SK-N-SH (cell line): ENCODE measurements at regions of chr2 and their contacts with region 1.

Region 1: GRCh38 chr2:117692001-117692763 is 122.3 kb upstream of the DDX18 start:
- DNase-seq: no peak
- H3K4me3 ChIP-seq: no peak overlapping the region
- H3K27ac ChIP-seq: peak overlapping the region in 1 of 2 experiments; percentile 99; a peak in 2 of 4 replicates
- H3K4me1 ChIP-seq: peaks cover 0 to 37% of the 10 kb centered on the region in 2 experiments; a peak in 2 of 4 replicates
- H3K27me3 ChIP-seq: no peaks in the 10 kb centered on the region
- CTCF ChIP-seq: no peak
- EP300 ChIP-seq: no peak
- RAD21 ChIP-seq: no peak

Region 2: GRCh38 chr2:117470311-117471095 is 221.7 kb before region 1 on chr2:
- CTCF ChIA-PET with region 1: interaction called, 10 read pairs
- POLR2A ChIA-PET with region 1: no interaction called
- DNase-seq: peak; percentile 43
- H3K4me3 ChIP-seq: no peak overlapping the region; a peak in 1 of 4 replicates
- H3K27ac ChIP-seq: peak overlapping the region in 1 of 2 experiments; percentile 82; a peak in 2 of 4 replicates
- H3K4me1 ChIP-seq: peaks cover 0 to 3% of the 10 kb centered on the region in 2 experiments; a peak in 1 of 4 replicates
- H3K27me3 ChIP-seq: no peaks in the 10 kb centered on the region
- CTCF ChIP-seq: peak; percentile 40
- EP300 ChIP-seq: peak in 1 of 2 experiments; percentile 77; a peak in 2 of 4 replicates
- RAD21 ChIP-seq: peak; percentile 89

Region 3: DNA sequence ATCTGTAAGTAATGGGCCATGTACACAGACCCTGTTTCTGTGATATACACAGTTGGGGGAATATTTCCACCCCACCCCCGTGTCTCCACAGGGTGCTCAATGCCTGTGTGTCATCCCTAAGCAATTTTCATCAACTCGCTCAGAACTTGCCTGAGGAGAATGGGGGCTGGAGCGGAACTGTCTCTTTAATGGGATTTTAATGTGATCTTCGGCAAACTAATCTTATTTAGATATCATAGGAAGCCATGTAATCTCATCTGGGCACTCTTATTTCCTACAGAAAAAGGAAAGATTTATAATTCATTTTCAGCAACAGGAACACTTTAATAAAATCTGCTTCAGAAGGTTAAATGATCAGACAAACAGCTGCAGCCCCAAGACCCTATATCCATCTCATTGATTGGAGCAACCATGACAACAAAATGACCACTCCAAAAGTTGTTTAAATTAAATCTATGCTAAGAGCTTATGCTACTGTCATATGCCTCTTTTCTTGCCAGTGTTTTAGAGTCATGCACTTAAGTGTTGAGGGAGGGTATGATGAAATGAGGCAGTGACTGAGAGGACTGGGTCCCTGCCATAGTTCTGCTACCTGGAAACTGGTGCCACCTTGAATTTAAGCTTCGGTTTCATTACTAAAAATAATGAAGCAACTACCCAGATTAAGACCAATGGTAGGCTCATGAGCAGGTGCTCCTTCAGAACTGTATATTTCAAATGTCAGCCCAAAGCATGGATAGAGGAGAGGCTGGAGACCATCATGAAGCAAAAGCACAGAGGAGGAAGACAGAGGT is 60.8 kb before region 1 on chr2:
- CTCF ChIA-PET with region 1: interaction called, 5 read pairs
- POLR2A ChIA-PET with region 1: interaction called, 30 read pairs
- DNase-seq: peak; percentile 80
- H3K4me3 ChIP-seq: no peak overlapping the region
- H3K27ac ChIP-seq: peak overlapping the region in 1 of 2 experiments; percentile 99; a peak in 2 of 4 replicates
- H3K4me1 ChIP-seq: peaks cover 0 to 28% of the 10 kb centered on the region in 2 experiments; a peak in 2 of 4 replicates
- H3K27me3 ChIP-seq: no peaks in the 10 kb centered on the region
- CTCF ChIP-seq: no peak
- EP300 ChIP-seq: peak; percentile 65 to 100; a peak in 3 of 4 replicates
- RAD21 ChIP-seq: peak; percentile 33

Region 4: DNA sequence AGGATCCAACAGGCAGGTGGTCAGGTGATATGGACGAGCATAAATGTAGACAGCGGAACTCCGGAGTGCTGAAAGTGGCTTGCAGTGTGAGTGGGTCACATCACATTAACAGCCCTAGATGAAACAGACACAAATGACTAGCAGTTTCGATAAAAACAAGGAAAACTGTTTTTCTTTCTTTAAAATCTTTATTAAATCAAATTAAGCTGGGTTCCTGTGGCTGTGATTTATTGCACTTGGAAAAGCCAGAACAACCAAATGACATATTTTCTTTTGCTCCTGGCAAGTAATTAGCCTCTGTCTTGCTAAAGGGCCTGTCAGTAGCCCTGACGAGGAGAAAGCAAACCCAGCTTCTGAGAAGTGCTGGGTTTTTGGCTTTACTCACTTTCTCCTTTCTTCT is 30.6 kb before region 1 on chr2:
- CTCF ChIA-PET with region 1: interaction called, 6 read pairs
- POLR2A ChIA-PET with region 1: interaction called, 14 read pairs
- DNase-seq: peak; percentile 71
- H3K4me3 ChIP-seq: no peak overlapping the region
- H3K27ac ChIP-seq: peak overlapping the region in 1 of 2 experiments; percentile 98; a peak in 2 of 4 replicates
- H3K4me1 ChIP-seq: peaks cover 0 to 33% of the 10 kb centered on the region in 2 experiments; a peak in 2 of 4 replicates
- H3K27me3 ChIP-seq: no peaks in the 10 kb centered on the region
- CTCF ChIP-seq: no peak
- EP300 ChIP-seq: peak; percentile 46 to 99; a peak in 3 of 4 replicates
- RAD21 ChIP-seq: peak; percentile 26

Region 5: DNA sequence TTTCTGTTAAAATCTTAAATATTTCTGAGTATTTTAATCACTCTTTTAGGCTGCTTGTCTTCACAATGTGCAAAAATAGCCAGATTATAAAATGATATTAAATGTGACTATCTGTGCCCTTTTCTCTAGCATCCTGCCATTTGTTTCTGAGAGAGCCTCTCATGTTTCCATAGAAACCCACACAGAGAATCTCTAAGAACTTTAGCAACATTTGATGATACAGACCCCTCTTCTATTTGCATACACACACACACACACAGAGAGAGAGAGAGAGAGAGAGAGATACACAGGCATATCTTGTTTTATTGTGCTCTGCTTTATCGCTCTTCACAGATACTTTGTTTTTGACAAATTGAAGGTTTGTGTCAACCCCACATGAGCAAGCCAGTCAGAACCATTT is 12.2 kb before region 1 on chr2:
- CTCF ChIA-PET with region 1: no interaction called
- POLR2A ChIA-PET with region 1: no interaction called
- DNase-seq: no peak
- H3K4me3 ChIP-seq: no peak overlapping the region
- H3K27ac ChIP-seq: peak overlapping the region in 1 of 2 experiments; percentile 43; a peak in 2 of 4 replicates
- H3K4me1 ChIP-seq: peaks cover 0 to 11% of the 10 kb centered on the region in 2 experiments; a peak in 2 of 4 replicates
- H3K27me3 ChIP-seq: no peaks in the 10 kb centered on the region
- CTCF ChIP-seq: no peak
- EP300 ChIP-seq: no peak
- RAD21 ChIP-seq: no peak

Region 6: GRCh38 chr2:117714745-117715417 is 22.7 kb after region 1 on chr2:
- CTCF ChIA-PET with region 1: interaction called, 3 read pairs
- POLR2A ChIA-PET with region 1: interaction called, 18 read pairs
- DNase-seq: no peak
- H3K4me3 ChIP-seq: no peak overlapping the region
- H3K27ac ChIP-seq: peak overlapping the region in 1 of 2 experiments; percentile 97; a peak in 2 of 4 replicates
- H3K4me1 ChIP-seq: peaks cover 0 to 45% of the 10 kb centered on the region in 2 experiments; a peak in 2 of 4 replicates
- H3K27me3 ChIP-seq: no peaks in the 10 kb centered on the region
- CTCF ChIP-seq: no peak
- EP300 ChIP-seq: no peak
- RAD21 ChIP-seq: no peak